CD4-positive, alpha-beta memory T cell (primary cell): ENCODE measurements at regions of chr3 and their contacts with region 1.

Region 1: DNA sequence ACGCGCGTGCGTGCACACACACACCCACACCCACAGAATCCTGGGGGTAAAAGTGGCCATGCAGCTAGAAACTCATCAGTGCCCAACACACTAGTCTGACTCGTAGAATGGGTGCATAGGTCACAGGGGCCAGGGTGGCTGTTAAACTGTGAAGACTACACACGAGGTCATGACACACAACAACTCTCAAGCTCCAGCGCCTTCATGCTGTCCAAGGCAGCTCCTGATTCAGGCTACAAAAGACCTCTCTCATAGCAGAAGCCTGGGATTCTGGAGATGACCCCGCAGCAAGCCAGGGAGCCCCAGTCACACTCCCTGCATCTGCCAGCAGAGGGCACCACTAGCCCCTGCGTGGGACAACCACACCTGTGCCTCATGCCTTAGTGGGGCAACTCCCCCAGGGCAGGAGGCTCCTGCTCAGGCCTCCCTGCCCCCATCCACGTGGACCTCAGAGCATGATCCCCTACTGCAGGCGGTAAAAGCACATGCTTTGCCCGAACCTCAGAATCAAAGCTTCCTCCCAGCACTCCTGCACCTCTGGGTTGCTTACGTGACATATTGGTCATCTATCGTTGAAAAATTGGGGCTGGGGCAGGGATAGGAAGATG is 93.1 kb downstream of the LRIG1 start:
- DNase-seq: peak; percentile 67 to 75 (median 70)
- H3K4me3 ChIP-seq: no peak overlapping the region
- H3K4me3 Mint-ChIP-seq: no peak overlapping the region
- H3K27ac ChIP-seq: no peak overlapping the region
- H3K27ac Mint-ChIP-seq: peak overlapping the region in 6 of 7 donors; percentile 37 to 76 (median 48)
- H3K4me1 ChIP-seq: no peaks in the 10 kb centered on the region
- H3K4me1 Mint-ChIP-seq: peaks cover 0 to 4% (median 2%) of the 10 kb centered on the region in 4 donors
- H3K27me3 ChIP-seq: no peaks in the 10 kb centered on the region
- H3K27me3 Mint-ChIP-seq: no peaks in the 10 kb centered on the region

Region 2: GRCh38 chr3:66253790-66254620 is 153.7 kb before region 1 on chr3:
- CTCF ChIA-PET with region 1: interaction called, 41 read pairs
- POLR2A ChIA-PET with region 1: no interaction called
- intact Hi-C with region 1: no loop called
- DNase-seq: peak in 4 of 5 donors; percentile 30 to 50 (median 41)
- H3K4me3 ChIP-seq: no peak overlapping the region
- H3K4me3 Mint-ChIP-seq: no peak overlapping the region
- H3K27ac ChIP-seq: no peak overlapping the region
- H3K27ac Mint-ChIP-seq: peak overlapping the region in 2 of 7 donors; percentile 24 to 64
- H3K4me1 ChIP-seq: no peaks in the 10 kb centered on the region
- H3K4me1 Mint-ChIP-seq: peaks cover 4 to 11% (median 5%) of the 10 kb centered on the region in 4 donors
- H3K27me3 ChIP-seq: no peaks in the 10 kb centered on the region
- H3K27me3 Mint-ChIP-seq: no peaks in the 10 kb centered on the region

Region 3: DNA sequence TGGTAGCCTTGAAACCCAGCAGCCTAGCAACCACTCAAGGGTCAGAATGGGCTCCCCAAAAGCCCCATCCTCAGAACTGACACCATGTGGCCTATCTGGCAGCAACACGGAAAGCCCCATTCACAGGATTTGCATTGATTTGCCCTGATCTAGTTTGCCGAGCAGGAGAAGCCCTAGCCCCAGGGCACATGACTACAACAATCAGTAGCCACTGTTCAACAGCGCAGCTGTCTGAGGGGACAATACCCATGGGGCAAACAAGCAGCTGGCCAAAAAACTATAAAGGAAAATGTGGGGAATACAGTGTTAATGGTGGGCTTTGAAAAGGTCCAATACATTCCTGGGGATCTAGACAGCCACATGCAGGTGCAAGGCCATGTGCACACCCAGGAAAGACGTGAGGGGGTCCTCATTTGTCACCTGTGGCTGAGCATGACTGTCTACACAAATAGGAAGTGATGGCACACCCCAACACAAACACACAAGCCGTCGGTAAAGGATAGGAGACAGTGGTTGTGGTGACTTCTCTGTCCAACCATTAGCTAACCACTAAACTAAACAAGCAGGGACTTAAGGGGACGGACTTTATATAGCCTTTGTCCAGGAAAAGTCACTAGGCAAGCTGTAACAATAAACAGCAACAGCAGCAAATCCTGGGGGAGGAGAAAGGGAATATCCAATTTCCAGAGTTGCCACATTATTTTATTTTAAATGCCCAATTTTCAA is 20.6 kb before region 1 on chr3:
- CTCF ChIA-PET with region 1: interaction called, 43 read pairs
- POLR2A ChIA-PET with region 1: interaction called, 3 read pairs
- intact Hi-C with region 1: no loop called
- DNase-seq: no peak
- H3K4me3 ChIP-seq: no peak overlapping the region
- H3K4me3 Mint-ChIP-seq: peak overlapping the region in 1 of 8 donors; percentile 48
- H3K27ac ChIP-seq: no peak overlapping the region
- H3K27ac Mint-ChIP-seq: peak overlapping the region in 5 of 7 donors; percentile 41 to 68 (median 66)
- H3K4me1 ChIP-seq: peaks cover 38% of the 10 kb centered on the region
- H3K4me1 Mint-ChIP-seq: peaks cover 32 to 62% (median 41%) of the 10 kb centered on the region in 4 donors
- H3K27me3 ChIP-seq: no peaks in the 10 kb centered on the region
- H3K27me3 Mint-ChIP-seq: no peaks in the 10 kb centered on the region

Region 4: GRCh38 chr3:66472313-66473134 is 64.8 kb after region 1 on chr3:
- CTCF ChIA-PET with region 1: interaction called, 10 read pairs
- POLR2A ChIA-PET with region 1: no interaction called
- intact Hi-C with region 1: no loop called
- DNase-seq: peak in 2 of 5 donors; percentile 48 to 74
- H3K4me3 ChIP-seq: peak overlapping the region; percentile 23 to 50
- H3K4me3 Mint-ChIP-seq: peak overlapping the region; percentile 57 to 86 (median 75)
- H3K27ac ChIP-seq: peak overlapping the region; percentile 29
- H3K27ac Mint-ChIP-seq: peak overlapping the region; percentile 0 to 90 (median 77)
- H3K4me1 ChIP-seq: peaks cover 92% of the 10 kb centered on the region
- H3K4me1 Mint-ChIP-seq: peaks cover 30 to 51% (median 41%) of the 10 kb centered on the region in 4 donors
- H3K27me3 ChIP-seq: no peaks in the 10 kb centered on the region
- H3K27me3 Mint-ChIP-seq: no peaks in the 10 kb centered on the region

Region 5: GRCh38 chr3:66495646-66496045 is 87.9 kb after region 1 on chr3:
- CTCF ChIA-PET with region 1: interaction called, 45 read pairs
- POLR2A ChIA-PET with region 1: interaction called, 8 read pairs
- intact Hi-C with region 1: no loop called
- DNase-seq: no peak
- H3K4me3 ChIP-seq: no peak overlapping the region
- H3K4me3 Mint-ChIP-seq: peak overlapping the region in 7 of 8 donors; percentile 51 to 99 (median 75)
- H3K27ac ChIP-seq: no peak overlapping the region
- H3K27ac Mint-ChIP-seq: peak overlapping the region; percentile 34 to 87 (median 67)
- H3K4me1 ChIP-seq: peaks cover 87% of the 10 kb centered on the region
- H3K4me1 Mint-ChIP-seq: peaks cover 72 to 94% (median 81%) of the 10 kb centered on the region in 4 donors
- H3K27me3 ChIP-seq: no peaks in the 10 kb centered on the region
- H3K27me3 Mint-ChIP-seq: no peaks in the 10 kb centered on the region

Region 6: DNA sequence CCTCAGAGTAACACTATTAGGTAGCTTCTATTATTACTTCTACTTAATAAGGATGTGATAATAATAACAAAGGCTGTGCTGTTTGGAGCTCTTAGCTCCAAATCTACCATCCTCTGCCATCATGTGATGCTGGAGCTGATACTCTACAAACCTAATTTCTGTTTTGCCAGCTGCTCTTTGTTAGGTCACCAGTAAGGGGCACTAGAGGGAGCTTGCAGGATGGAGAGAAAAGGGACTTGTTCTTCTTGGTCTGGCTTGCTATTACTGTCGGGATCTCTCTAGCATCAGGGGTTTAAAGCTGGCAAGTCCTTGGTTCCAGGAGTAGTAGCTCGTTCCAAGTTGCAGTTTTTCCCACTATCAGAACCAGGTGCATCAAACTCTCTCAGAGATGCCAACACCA is 395.5 kb after region 1 on chr3:
- CTCF ChIA-PET with region 1: interaction called, 23 read pairs
- POLR2A ChIA-PET with region 1: no interaction called
- intact Hi-C with region 1: no loop called
- DNase-seq: no peak
- H3K4me3 ChIP-seq: no peak overlapping the region
- H3K4me3 Mint-ChIP-seq: peak overlapping the region in 1 of 8 donors; percentile 18
- H3K27ac ChIP-seq: no peak overlapping the region
- H3K27ac Mint-ChIP-seq: peak overlapping the region in 1 of 7 donors; percentile 11
- H3K4me1 ChIP-seq: no peaks in the 10 kb centered on the region
- H3K4me1 Mint-ChIP-seq: peaks cover 2 to 11% (median 7%) of the 10 kb centered on the region in 4 donors
- H3K27me3 ChIP-seq: no peaks in the 10 kb centered on the region
- H3K27me3 Mint-ChIP-seq: peaks cover 12 to 14% of the 10 kb centered on the region in 2 donors

Region 7: DNA sequence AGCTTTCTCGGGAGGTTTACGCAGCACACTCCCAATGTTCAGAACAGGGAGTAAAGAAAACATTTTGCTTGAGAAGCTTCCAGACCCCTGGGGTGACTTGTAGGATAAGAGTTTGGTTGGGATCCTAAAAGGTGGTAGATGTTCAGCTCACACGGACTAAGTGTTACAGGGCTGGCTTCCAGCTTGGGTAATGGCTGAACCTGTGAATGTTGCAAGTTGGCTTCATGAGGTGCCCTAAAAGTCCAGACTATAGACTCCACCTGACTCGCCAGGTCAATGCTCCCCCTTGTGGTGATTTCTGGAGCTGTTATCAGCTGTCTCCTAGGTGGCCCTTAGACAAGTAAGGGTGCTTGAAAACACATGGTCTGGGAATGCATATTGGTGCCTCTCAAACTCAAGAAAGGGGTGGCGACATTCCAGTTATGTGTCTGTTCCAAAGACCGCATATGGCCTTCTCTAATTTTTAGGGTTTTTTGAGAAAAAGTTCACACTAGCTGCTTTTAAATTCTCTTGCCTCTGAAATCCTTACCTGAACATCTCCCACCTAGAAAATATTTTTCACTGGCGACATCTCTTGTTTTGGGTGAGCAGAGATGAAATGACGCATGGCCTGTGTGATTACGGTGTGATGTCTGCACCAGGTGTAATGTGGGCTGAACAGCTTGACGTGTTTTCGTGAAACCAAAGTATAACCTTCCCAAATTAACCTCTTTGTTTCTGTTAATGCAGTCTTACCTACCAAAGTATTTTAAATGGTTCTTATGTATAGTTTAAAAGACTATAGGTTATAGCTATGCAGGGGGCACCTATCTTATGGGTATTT is 414.7 kb after region 1 on chr3:
- CTCF ChIA-PET with region 1: interaction called, 187 read pairs
- POLR2A ChIA-PET with region 1: no interaction called
- intact Hi-C with region 1: no loop called
- DNase-seq: peak; percentile 60 to 73 (median 64)
- H3K4me3 ChIP-seq: no peak overlapping the region
- H3K4me3 Mint-ChIP-seq: no peak overlapping the region
- H3K27ac ChIP-seq: no peak overlapping the region
- H3K27ac Mint-ChIP-seq: no peak overlapping the region
- H3K4me1 ChIP-seq: no peaks in the 10 kb centered on the region
- H3K4me1 Mint-ChIP-seq: peaks cover 0 to 2% (median 0%) of the 10 kb centered on the region in 4 donors
- H3K27me3 ChIP-seq: no peaks in the 10 kb centered on the region
- H3K27me3 Mint-ChIP-seq: peaks cover 0 to 4% of the 10 kb centered on the region in 2 donors